Activated naive CD8-positive, alpha-beta T cell treated with anti-CD3 and anti-CD28 coated beads, Interleukin-2, amount 10 ng/mL, durations not matched to agents 7 days and 5 days (primary cell): ENCODE measurements at regions of chr1 and their contacts with region 1.

Region 1: DNA sequence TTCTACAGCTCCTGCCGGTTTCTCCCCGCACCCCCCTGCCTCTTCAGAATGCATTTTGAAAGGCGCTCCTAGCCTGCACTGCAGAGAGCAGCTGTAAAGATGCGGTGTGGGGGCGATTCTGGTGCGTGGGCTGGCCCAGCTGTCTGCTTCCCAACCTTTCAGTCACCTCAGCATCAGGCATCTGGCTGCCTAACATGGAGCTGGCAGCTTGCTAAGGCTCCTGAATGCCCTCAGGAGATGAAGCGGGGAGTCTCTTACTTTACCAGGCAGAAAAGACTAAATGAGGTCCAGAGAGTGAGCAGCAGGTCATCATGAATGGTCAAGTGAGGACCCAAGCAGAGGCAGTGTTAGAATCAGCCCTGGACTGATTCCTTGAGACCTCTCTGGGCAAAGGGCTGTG is 8.7 kb downstream of the IER5 start:
- DNase-seq: peak; percentile 19
- ATAC-seq: no peak
- H3K4me3 Mint-ChIP-seq: no peak overlapping the region
- H3K27ac Mint-ChIP-seq: peak overlapping the region; percentile 48
- H3K4me1 Mint-ChIP-seq: peaks cover 71% of the 10 kb centered on the region
- H3K27me3 Mint-ChIP-seq: no peaks in the 10 kb centered on the region

Region 2: DNA sequence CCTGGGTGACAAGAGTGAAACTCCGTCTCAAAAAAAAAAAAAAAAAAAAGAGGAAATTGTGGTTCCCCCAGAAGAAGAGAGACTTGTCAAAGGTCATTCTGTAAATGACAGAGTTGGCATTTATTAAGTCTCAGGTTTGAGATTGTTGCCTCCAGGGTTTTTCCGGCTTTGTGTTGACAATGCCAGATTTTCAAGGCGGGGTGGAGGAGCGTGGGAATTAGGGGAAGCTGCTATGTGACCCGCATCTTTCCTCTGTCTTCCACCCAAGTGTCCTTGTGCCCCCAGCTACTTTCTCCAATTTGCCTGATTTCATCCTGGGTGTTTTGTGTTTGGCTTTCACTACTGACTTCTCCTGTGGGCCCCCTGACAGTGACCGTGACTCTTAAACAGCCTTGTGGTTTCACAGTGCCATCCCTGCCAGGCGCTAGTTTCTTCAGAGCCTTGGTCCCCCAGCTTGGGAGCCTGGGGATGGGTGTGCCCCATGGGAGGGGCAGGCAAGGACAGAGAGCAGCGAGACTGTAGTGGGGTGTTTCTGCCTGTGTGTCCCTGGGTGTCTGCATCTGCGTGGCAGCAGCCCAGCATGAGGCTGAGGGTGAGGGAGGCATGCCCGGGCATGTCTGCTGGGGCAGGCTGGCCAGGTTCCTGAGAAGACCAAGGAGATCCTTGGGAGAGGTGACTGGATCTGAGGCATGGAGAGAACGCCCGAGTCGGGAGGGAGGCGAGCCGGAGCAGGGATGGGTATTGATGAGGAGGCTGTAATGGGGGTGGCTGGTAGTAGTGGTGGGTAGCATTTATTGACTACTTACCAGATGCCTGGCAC is 37.5 kb after region 1 on chr1:
- POLR2A ChIA-PET with region 1: interaction called, 175 read pairs
- DNase-seq: peak; percentile 50
- ATAC-seq: peak; percentile 48
- H3K4me3 Mint-ChIP-seq: peak overlapping the region; percentile 58
- H3K27ac Mint-ChIP-seq: peak overlapping the region; percentile 86
- H3K4me1 Mint-ChIP-seq: peaks cover 67% of the 10 kb centered on the region
- H3K27me3 Mint-ChIP-seq: peaks cover 3% of the 10 kb centered on the region

Region 3: GRCh38 chr1:181159451-181160140 is 62.4 kb after region 1 on chr1:
- POLR2A ChIA-PET with region 1: no interaction called
- DNase-seq: peak; percentile 77
- ATAC-seq: peak; percentile 85
- H3K4me3 Mint-ChIP-seq: peak overlapping the region; percentile 58
- H3K27ac Mint-ChIP-seq: peak overlapping the region; percentile 86
- H3K4me1 Mint-ChIP-seq: peaks cover 21% of the 10 kb centered on the region
- H3K27me3 Mint-ChIP-seq: peaks cover 17% of the 10 kb centered on the region